Mammary epithelial cell (primary cell): ENCODE measurements at regions of chr13 and their contacts with region 1.

Region 1: GRCh38 chr13:97359181-97360057 is 74.5 kb upstream of the RAP2A start:
- DNase-seq: peak; percentile 36
- H3K4me3 ChIP-seq: no peak overlapping the region
- H3K27ac ChIP-seq: no peak overlapping the region
- H3K4me1 ChIP-seq: no peaks in the 10 kb centered on the region
- H3K27me3 ChIP-seq: no peaks in the 10 kb centered on the region
- CTCF ChIP-seq: peak; percentile 77 to 89

Region 2: DNA sequence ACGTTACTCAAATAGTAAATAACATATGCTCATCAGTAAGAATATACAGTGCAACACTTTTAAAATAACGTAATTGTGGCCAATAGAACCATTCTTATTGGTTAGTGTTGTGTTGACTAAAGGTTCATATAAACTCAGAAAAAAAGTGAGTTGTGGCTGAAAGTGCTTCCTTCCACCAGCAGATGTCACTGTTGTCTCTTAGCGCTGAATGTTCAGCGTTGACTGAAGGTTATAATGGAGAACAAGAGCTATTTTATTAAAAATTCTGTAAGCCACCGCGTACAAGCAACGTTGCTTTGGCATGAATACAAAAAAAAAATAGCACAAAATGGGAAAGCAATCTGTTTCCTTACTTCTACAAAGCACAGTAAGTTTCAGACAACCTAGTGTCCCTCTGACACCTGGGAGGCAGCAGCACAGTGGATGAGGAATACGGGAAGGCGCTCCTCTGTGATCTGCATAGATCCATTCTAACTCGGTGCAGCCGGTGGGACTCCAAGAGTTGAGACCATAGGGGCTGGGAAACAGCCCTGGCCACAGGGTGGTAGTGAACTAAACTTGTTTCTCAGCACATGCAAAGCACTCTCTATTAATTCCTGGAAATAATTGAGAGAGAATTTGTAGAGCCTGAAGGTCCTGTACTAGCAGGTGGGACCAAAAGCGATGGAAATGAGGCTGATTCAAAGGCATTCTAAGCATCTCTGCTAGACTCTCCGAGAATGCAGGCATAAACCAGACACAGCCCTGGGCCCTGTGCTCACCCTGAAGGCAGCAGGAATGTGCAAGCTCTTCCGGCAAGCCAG is 341.2 kb before region 1 on chr13:
- CTCF ChIA-PET with region 1: no interaction called
- dilution Hi-C with region 1: no loop called
- in situ Hi-C with region 1: no loop called
- intact Hi-C with region 1: loop called (anchors 1 kb)
- DNase-seq: peak; percentile 39
- H3K4me3 ChIP-seq: no peak overlapping the region
- H3K27ac ChIP-seq: no peak overlapping the region
- H3K4me1 ChIP-seq: no peaks in the 10 kb centered on the region
- H3K27me3 ChIP-seq: peaks cover 3% of the 10 kb centered on the region
- CTCF ChIP-seq: peak; percentile 89 to 96

Region 3: GRCh38 chr13:97030705-97031452 is 328.5 kb before region 1 on chr13:
- CTCF ChIA-PET with region 1: no interaction called
- dilution Hi-C with region 1: no loop called
- in situ Hi-C with region 1: no loop called
- intact Hi-C with region 1: loop called (anchors 1 kb)
- DNase-seq: peak; percentile 30
- H3K4me3 ChIP-seq: no peak overlapping the region
- H3K27ac ChIP-seq: no peak overlapping the region
- H3K4me1 ChIP-seq: no peaks in the 10 kb centered on the region
- H3K27me3 ChIP-seq: peaks cover 3% of the 10 kb centered on the region
- CTCF ChIP-seq: peak; percentile 41 to 48

Region 4: GRCh38 chr13:97109841-97110492 is 249.5 kb before region 1 on chr13:
- CTCF ChIA-PET with region 1: interaction called, 6 read pairs
- dilution Hi-C with region 1: no loop called
- in situ Hi-C with region 1: loop called in 1 of 2 experiments (anchors 10 kb)
- intact Hi-C with region 1: loop called (anchors 1 kb)
- DNase-seq: peak; percentile 85
- H3K4me3 ChIP-seq: no peak overlapping the region
- H3K27ac ChIP-seq: no peak overlapping the region
- H3K4me1 ChIP-seq: peaks cover 16% of the 10 kb centered on the region
- H3K27me3 ChIP-seq: no peaks in the 10 kb centered on the region
- CTCF ChIP-seq: peak; percentile 62 to 95

Region 5: GRCh38 chr13:97124916-97125809 is 234.3 kb before region 1 on chr13:
- CTCF ChIA-PET with region 1: no interaction called
- dilution Hi-C with region 1: no loop called
- in situ Hi-C with region 1: loop called in 1 of 2 experiments (anchors 5 kb)
- intact Hi-C with region 1: no loop called
- DNase-seq: peak; percentile 90
- H3K4me3 ChIP-seq: no peak overlapping the region
- H3K27ac ChIP-seq: peak overlapping the region; percentile 79
- H3K4me1 ChIP-seq: peaks cover 58% of the 10 kb centered on the region
- H3K27me3 ChIP-seq: no peaks in the 10 kb centered on the region
- CTCF ChIP-seq: peak in 1 of 2 donors; percentile 9

Region 6: DNA sequence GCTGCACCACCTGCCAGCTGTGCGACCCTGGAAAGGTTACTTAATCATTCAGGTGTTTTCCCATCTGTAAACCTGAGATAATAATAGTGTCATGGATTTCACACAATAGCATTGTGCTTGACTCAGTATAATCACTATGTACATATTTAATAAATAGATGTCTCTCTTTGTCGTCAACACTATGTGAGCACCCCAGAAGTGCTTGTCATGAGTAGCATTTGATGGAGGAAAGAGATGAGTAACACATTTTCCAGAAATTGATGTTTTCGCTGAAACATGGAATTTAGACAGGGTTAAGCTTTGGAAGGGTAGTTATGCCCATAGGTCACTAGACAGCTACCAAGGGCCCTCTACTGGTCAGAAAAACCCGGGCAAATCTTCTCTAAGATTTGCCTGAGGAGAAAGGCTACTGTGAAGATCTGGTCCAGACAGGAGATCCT is 146.8 kb before region 1 on chr13:
- CTCF ChIA-PET with region 1: no interaction called
- dilution Hi-C with region 1: no loop called
- in situ Hi-C with region 1: no loop called
- intact Hi-C with region 1: loop called (anchors 1 kb)
- DNase-seq: peak; percentile 67
- H3K4me3 ChIP-seq: no peak overlapping the region
- H3K27ac ChIP-seq: no peak overlapping the region
- H3K4me1 ChIP-seq: peaks cover 24% of the 10 kb centered on the region
- H3K27me3 ChIP-seq: no peaks in the 10 kb centered on the region
- CTCF ChIP-seq: peak; percentile 70 to 85

Region 7: GRCh38 chr13:97537110-97537509 is 177.7 kb after region 1 on chr13:
- CTCF ChIA-PET with region 1: no interaction called
- dilution Hi-C with region 1: no loop called
- in situ Hi-C with region 1: no loop called
- intact Hi-C with region 1: no loop called
- DNase-seq: no peak
- H3K4me3 ChIP-seq: no peak overlapping the region
- H3K27ac ChIP-seq: no peak overlapping the region
- H3K4me1 ChIP-seq: no peaks in the 10 kb centered on the region
- H3K27me3 ChIP-seq: no peaks in the 10 kb centered on the region
- CTCF ChIP-seq: no peak

Region 8: GRCh38 chr13:97574926-97575325 is 215.5 kb after region 1 on chr13:
- CTCF ChIA-PET with region 1: no interaction called
- dilution Hi-C with region 1: no loop called
- in situ Hi-C with region 1: no loop called
- intact Hi-C with region 1: loop called (anchors 10 kb)
- DNase-seq: peak; percentile 3
- H3K4me3 ChIP-seq: no peak overlapping the region
- H3K27ac ChIP-seq: no peak overlapping the region
- H3K4me1 ChIP-seq: no peaks in the 10 kb centered on the region
- H3K27me3 ChIP-seq: no peaks in the 10 kb centered on the region
- CTCF ChIP-seq: peak; percentile 34 to 66